ENCODE measurements at regions of chr19 and their contacts with region 1.

Region 1: GRCh38 chr19:1074544-1075283 is 7.7 kb downstream of the ARHGAP45 start:
- DNase-seq: peak; percentile 94
- H3K4me3 Mint-ChIP-seq: peak overlapping the region; percentile 78
- H3K27ac Mint-ChIP-seq: peak overlapping the region; percentile 89
- H3K4me1 Mint-ChIP-seq: peaks cover 42% of the 10 kb centered on the region
- H3K27me3 Mint-ChIP-seq: peaks cover 2% of the 10 kb centered on the region

Region 2: DNA sequence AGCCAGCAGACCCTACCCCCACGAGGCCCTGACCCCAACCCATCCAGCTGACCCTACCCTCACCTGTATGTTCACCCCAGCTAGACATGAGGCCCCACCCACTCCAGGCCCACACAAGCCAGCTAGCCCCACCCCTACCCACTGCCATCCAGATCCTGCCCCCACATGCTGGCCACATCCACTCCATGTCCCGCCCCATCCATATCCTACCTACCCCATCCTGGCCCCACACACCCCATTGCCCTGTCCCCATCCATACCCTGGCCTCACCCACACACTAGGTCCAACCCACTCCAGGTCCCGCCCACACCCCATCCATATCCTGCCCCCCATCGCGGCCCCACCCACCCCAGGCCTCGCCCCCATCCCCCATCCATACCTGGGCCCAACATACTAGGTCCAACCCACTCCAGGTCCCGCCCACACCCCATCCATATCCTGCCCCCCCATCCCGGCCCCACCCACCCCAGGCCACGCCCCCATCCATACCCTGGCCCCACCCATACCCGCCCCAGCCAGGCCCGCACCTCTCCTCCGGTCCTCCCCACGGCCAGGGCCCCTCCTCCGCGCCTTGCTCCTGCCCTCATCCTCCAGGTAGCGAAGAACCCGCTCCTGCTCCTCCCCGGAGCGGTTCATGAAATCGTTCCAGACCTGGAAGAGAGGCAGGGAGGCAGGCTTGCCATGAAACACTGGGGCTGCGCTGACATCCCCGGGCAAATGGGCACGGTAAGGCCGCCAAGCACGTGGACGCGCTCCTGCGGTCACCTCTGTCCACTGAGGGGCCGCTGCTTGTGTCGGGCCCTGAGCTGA is 174.2 kb before region 1 on chr19:
- intact Hi-C with region 1: no loop called
- DNase-seq: peak; percentile 81
- H3K4me3 Mint-ChIP-seq: no peak overlapping the region
- H3K27ac Mint-ChIP-seq: no peak overlapping the region
- H3K4me1 Mint-ChIP-seq: peaks cover 6% of the 10 kb centered on the region
- H3K27me3 Mint-ChIP-seq: no peaks in the 10 kb centered on the region

Region 3: GRCh38 chr19:1094975-1095701 is 20.4 kb after region 1 on chr19 and contains the start of gene POLR2E:
- intact Hi-C with region 1: loop called (anchors 2 kb)
- DNase-seq: peak; percentile 100
- H3K4me3 Mint-ChIP-seq: peak within 1 kb of the TSS; percentile 95
- H3K27ac Mint-ChIP-seq: peak within 1 kb of the TSS; percentile 93
- H3K4me1 Mint-ChIP-seq: peaks cover 37% of the 10 kb centered on the region
- H3K27me3 Mint-ChIP-seq: no peaks in the 10 kb centered on the region
- total RNA-seq, gene POLR2E: 273 and 274 TPM in 2 replicates

Region 4: DNA sequence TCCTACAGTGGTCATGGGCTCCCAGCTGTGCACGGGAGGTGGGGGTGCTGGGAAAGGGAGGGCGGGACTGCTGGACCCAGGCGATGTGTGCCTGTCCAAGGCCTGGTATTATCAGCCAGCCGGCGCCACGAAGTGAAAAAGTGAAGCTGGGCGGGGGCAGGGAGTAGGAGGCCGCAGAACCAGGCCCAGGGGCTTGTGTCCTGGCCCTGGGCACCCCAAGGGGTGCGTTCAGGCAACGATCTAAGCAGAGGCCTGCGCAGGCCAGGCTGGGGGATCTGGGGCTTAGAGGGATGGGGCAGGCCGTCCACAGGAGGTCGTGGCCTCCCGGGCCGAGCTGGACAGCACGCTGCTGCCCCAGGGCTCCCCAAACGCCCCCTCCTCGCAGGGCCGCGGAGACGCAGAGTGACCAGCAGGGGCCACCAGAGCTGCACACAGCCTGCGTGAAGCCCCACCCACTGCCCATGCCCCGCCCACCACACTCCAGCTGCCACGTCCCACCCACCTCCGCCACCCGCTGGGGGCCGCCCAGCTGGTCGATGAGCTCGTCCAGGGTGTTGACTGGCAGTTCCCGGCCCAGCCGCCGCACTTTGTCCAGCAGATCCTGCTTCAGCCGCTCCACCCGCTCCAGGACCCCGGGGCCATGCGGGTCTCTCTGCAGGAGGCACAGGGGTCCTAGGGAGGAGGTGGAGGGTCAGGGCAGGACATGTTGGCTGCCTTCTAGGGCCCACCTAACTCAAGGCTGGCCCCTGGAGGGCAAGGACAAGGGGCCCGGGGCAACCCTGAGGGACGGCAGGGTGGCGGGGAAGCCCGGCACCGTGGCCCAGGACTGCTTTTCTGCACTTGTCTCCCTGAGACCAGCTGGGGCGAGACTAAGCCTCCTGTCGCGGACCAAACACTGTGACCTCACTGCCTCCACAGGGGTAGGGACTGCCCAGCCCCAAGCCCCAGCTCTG is 38.6 kb after region 1 on chr19:
- intact Hi-C with region 1: no loop called
- DNase-seq: peak; percentile 93
- H3K4me3 Mint-ChIP-seq: no peak overlapping the region
- H3K27ac Mint-ChIP-seq: no peak overlapping the region
- H3K4me1 Mint-ChIP-seq: no peaks in the 10 kb centered on the region
- H3K27me3 Mint-ChIP-seq: no peaks in the 10 kb centered on the region